ENCODE measurements at regions of chr19 and their contacts with region 1.

Region 1: DNA sequence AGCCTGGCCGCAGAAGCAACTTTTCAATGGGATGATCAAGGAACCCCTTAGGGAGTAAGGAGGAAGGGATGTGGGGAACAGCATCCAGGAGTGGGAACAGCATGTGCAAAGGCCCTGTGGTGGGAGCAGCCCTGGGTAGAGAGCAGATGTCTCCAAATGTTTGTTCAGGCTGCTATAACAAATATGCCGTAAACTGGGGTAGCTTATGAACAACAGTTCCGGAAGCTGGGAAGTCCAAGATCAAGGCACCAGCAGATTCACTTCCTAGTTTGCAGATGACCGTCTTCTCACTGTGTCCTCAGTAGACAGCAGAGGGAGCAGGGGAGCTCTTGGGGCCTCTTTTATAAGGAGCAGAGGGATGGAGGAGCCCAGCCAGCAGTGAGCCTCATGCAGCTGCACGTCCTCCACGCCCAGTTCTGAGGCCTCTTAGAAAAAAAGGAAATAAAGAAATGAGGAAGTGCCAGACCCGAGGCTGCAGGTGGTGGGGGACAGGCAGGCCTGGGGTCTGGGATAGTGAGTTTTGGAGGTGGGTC is 4.2 kb upstream of the LRRC25 start:
- DNase-seq: no peak
- H3K4me3 Mint-ChIP-seq: no peak overlapping the region
- H3K27ac Mint-ChIP-seq: no peak overlapping the region
- H3K4me1 Mint-ChIP-seq: peaks cover 13% of the 10 kb centered on the region
- H3K27me3 Mint-ChIP-seq: peaks cover 3% of the 10 kb centered on the region

Region 2: DNA sequence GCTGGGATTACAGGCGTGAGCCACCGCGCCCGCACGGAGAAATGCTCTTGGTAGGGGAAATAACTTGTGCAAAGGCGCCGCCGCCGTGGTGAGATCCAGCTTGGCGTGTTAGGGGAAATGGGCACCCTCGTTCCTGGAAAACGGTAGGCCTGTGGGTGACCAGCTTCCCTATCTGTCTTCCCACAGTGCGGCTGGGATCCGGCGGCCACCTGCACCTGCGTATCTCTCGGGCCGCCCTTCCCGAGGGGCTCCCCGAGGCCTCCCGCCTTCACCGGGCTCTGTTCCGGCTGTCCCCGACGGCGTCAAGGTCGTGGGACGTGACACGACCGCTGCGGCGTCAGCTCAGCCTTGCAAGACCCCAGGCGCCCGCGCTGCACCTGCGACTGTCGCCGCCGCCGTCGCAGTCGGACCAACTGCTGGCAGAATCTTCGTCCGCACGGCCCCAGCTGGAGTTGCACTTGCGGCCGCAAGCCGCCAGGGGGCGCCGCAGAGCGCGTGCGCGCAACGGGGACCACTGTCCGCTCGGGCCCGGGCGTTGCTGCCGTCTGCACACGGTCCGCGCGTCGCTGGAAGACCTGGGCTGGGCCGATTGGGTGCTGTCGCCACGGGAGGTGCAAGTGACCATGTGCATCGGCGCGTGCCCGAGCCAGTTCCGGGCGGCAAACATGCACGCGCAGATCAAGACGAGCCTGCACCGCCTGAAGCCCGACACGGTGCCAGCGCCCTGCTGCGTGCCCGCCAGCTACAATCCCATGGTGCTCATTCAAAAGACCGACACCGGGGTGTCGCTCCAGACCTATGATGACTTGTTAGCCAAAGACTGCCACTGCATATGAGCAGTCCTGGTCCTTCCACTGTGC is 13.3 kb before region 1 on chr19:
- intact Hi-C with region 1: loop called (anchors 1 kb)
- DNase-seq: peak; percentile 77
- H3K4me3 Mint-ChIP-seq: peak overlapping the region; percentile 61
- H3K27ac Mint-ChIP-seq: no peak overlapping the region
- H3K4me1 Mint-ChIP-seq: peaks cover 5% of the 10 kb centered on the region
- H3K27me3 Mint-ChIP-seq: peaks cover 57% of the 10 kb centered on the region

Measured in activated T-helper 1 cell treated with anti-CD3 and anti-CD28 coated beads, Interleukin-12 subunit alpha, Interleukin-12 subunit beta, Interleukin-2, Interleukin-4 antibody, amounts not matched to agents 30 ng/mL and 10 ng/mL and 1 ng/mL, durations not matched to agents 14 hours and 24 hours and 36 hours (primary cell).